Heart right ventricle (tissue), 16 donors: ENCODE measurements at regions of chr6 and their contacts with region 1.

Region 1: DNA sequence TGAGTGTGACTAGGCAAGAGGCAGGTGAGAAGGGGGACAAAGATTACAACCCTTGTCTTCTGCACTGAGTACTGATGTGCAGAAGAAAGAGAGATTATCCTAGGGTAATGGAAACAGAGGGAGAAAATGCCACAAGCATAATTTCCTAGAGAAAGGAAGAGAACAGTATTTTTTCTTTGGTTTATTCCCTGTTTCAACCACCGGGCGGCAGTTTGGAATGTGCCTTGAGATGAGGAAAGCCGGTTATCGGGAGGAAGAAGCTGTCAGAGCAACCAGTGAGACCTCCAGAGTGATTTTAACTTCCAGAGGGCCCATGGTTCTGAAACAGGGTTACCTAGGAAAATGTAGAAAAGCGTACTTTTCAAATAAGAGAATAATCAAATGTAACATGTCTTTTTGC is 121.4 kb downstream of the REV3L start:
- DNase-seq: peak in 1 of 2 donors; percentile 38
- ATAC-seq: peak in 4 of 8 donors; percentile 34 to 61 (median 55)
- H3K4me3 ChIP-seq: no peak overlapping the region
- H3K27ac ChIP-seq: no peak overlapping the region
- H3K4me1 ChIP-seq: no peaks in the 10 kb centered on the region
- H3K27me3 ChIP-seq: no peaks in the 10 kb centered on the region
- CTCF ChIP-seq: peak in 8 of 9 donors; percentile 28 to 61 (median 47)

Region 2: DNA sequence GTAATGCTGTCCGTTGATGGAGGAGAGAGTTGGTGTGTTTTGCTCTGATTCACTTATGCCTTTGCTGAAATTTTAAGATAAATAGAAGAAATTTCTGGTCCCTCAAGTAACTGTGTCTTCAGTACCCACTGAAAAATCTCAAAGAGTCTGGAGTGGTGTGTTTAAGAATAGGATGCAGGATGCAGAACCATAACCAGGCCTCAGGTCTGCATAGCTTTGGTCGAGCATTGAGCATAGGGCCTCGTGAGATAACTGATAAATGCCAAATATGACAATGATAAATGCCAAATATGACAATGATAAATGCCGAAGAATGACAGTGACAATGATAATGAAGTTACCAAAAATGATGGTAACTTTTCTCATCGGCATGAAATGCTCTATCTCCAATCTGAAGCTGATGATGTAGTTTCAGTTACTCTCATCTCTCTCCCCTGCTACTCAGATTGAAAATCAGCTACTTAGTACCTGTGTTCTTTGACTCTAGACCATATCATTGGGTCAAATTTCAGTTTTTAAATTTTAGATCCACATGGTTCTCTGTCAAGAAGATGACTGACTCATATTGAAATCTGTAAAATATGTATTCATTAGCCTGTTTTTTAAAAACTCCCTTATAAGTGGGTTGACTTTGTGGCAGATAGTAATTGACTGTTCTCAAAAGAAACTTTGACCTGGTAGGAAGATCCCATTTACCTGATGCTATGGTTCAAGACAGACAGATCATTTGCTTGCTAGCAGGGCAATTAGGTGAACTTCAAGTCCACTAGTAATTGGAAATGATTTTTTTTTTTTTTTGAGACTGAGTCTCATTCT is 177.7 kb before region 1 on chr6:
- intact Hi-C with region 1: no loop called
- DNase-seq: no peak
- ATAC-seq: no peak
- H3K4me3 ChIP-seq: no peak overlapping the region
- H3K27ac ChIP-seq: no peak overlapping the region
- H3K4me1 ChIP-seq: peaks cover 0 to 6% (median 0%) of the 10 kb centered on the region in 9 donors
- H3K27me3 ChIP-seq: no peaks in the 10 kb centered on the region
- CTCF ChIP-seq: no peak

Region 3: DNA sequence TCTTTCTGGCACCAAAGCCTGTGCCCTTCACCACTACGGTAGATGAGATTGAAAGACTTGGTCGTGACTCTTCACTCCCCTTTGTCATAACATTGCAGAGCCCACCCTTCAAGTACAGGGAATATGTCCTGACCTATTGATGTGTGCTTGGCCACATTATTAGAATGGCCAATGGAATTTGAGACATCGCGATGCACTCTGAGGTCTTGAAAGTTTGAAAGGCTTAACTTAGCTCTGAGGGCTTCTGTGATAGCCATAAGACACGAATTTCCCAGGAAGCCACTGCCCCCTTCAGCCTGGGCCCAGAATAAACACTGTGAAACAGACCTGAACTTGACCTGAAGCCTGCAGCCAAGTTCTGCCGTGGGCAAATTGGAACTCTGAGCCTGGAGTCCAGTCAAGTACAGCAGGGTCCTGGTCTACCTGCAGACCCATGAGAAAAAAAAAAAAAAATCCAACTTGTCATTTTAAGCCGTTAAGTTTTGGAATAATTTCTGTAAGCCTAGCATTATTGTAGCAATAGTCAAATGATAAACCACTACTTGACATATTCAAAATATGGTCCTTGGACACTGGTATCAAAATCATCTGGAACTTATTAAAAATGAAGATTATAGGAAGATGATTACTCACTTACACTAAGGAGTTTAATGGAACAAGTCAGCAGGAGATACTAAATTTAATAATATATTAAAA is 281.0 kb after region 1 on chr6:
- intact Hi-C with region 1: loop called in 9 of 10 experiments (anchors 5 to 10 kb)
- DNase-seq: peak; percentile 52 to 78
- ATAC-seq: peak; percentile 83 to 95 (median 92)
- H3K4me3 ChIP-seq: no peak overlapping the region
- H3K27ac ChIP-seq: no peak overlapping the region
- H3K4me1 ChIP-seq: peaks cover 0 to 14% (median 0%) of the 10 kb centered on the region in 9 donors
- H3K27me3 ChIP-seq: no peaks in the 10 kb centered on the region
- CTCF ChIP-seq: peak; percentile 43 to 81 (median 64)